Right cardiac atrium (tissue), 5 donors: ENCODE measurements at regions of chr20 and their contacts with region 1.

Region 1: GRCh38 chr20:37990571-37991151 is 42.6 kb downstream of the TTI1 start:
- DNase-seq: peak; percentile 66 to 87 (median 82)
- ATAC-seq: peak; percentile 72 to 80
- H3K4me3 ChIP-seq: no peak overlapping the region
- H3K27ac ChIP-seq: peak overlapping the region; percentile 87
- H3K4me1 ChIP-seq: peaks cover 19% of the 10 kb centered on the region
- H3K27me3 ChIP-seq: no peaks in the 10 kb centered on the region

Region 2: GRCh38 chr20:37202267-37202943 is 788.3 kb before region 1 on chr20:
- intact Hi-C with region 1: no loop called
- DNase-seq: peak in 1 of 3 donors; percentile 64
- ATAC-seq: peak in 1 of 2 donors; percentile 68
- H3K4me3 ChIP-seq: no peak overlapping the region
- H3K27ac ChIP-seq: no peak overlapping the region
- H3K4me1 ChIP-seq: no peaks in the 10 kb centered on the region
- H3K27me3 ChIP-seq: no peaks in the 10 kb centered on the region

Region 3: DNA sequence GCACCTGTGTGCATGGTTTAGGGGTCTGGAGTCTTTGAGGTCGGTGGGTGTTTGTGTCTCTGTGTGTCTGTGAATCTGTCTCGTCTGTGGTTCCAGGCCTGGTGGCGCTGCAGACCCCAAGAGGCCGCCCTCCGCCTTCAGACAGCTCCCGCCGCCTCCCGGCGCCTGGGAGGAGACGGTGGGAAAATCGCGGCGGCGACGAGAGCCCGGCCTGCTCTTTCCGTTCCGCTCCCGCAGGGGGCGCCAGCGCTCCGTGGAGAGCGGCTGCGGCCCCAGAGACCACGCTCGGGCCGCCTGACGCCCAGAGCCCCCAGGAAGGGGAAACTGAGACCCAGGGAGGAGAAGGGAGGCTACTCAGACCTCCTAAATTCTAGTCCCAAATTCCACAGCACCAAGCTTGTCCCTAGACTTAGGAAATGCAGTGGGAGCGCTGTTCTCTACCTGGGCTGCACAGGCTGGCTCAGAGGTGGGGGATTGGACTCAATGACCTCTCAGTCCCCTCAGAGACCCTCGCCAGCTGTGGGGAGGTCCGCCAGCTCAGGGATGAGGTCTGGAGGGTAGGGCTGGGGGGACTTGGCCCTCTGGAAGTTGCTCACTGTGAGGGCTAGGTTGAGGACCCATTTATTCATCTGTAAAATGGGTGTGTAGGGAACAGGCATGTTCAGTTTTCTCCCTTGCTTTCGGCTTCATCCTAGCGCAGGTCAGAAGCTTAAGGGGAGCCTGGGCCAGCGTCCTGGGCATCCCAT is 426.1 kb before region 1 on chr20:
- intact Hi-C with region 1: loop called in 2 of 4 experiments (anchors 10 kb)
- DNase-seq: peak; percentile 18 to 75 (median 73)
- ATAC-seq: peak; percentile 47 to 79
- H3K4me3 ChIP-seq: no peak overlapping the region
- H3K27ac ChIP-seq: no peak overlapping the region
- H3K4me1 ChIP-seq: no peaks in the 10 kb centered on the region
- H3K27me3 ChIP-seq: no peaks in the 10 kb centered on the region

Region 4: DNA sequence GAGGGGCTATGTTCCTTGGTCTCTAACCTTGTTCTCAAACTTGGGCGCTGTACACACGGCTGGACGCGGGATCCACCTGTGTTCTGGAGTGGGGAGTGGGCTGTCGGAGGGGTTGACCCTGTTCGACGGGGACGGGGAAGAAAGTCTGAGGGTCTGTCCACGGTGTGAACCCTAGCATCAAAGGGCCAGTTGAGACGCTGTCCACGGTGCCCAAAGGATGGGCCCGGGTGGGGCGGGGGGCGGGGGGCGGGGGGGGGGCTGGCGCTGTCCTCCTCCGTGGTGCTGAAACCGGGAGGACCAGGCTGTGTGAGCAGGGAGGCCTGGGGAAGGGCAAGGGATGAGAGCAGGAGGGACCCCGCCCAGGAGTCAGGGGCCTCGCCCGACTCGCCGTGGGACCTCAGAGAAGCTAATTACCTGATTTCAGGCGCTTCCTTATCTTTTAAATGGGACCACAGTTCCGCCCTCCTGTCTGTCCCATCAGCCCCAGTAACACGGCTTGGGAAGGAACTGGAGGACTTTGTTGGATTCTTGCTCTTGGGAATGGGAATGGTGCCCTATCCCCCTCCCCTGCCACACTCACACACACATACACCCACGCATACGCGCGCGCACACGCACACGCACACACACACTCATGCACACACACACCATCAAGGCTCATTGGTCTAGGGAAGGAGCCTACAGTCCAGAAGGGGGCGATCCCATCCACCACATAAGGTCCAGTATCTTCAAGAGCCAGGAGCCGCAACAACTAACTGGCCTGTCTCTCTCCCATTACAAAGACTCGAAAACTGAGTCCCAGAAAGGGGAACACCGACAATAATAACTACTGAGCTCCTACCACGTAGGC is 88.8 kb before region 1 on chr20:
- intact Hi-C with region 1: loop called in 3 of 4 experiments (anchors 5 kb)
- DNase-seq: no peak
- ATAC-seq: peak; percentile 62 to 67
- H3K4me3 ChIP-seq: peak overlapping the region; percentile 42
- H3K27ac ChIP-seq: no peak overlapping the region
- H3K4me1 ChIP-seq: peaks cover 5% of the 10 kb centered on the region
- H3K27me3 ChIP-seq: no peaks in the 10 kb centered on the region

Region 5: DNA sequence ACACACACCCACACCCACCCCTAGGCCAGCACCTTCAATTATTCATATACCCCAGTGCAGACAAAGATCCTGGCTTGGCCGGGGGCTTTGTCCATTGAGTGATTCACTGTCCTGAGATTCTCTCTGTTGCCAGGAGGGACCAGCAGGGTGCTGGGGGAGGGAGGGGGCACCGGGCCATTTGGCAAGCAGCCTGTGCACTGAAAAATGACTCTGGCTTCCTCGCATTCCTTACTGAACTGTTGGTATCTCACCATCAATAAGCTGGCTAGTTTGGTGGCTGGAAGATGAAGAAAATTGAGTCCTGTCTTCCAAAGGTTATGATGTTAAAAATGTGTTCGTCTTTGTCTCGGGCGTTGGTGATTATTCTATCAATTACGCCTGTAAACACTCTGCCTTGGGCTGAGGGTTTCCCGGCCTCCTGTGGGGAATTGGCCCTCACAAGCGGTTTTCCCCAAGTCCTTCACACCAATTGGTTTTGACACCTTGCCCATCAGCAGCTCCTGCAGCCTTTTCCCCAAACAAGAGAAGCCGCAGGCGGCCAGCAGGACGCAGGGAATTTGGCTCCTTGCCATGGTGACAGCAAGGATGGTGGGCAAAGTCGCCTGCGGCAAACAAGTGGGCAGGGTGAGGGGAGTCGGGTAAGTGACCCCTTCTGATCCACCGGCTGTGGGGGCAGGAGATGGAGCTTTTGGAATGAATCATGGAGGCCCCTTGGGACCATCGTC is 82.8 kb before region 1 on chr20:
- intact Hi-C with region 1: loop called in 3 of 4 experiments (anchors 5 kb)
- DNase-seq: peak in 1 of 3 donors; percentile 68
- ATAC-seq: peak in 1 of 2 donors; percentile 37
- H3K4me3 ChIP-seq: no peak overlapping the region
- H3K27ac ChIP-seq: peak overlapping the region; percentile 45
- H3K4me1 ChIP-seq: peaks cover 10% of the 10 kb centered on the region
- H3K27me3 ChIP-seq: no peaks in the 10 kb centered on the region